ENCODE measurements at regions of chr1 and their contacts with region 1.

Region 1: DNA sequence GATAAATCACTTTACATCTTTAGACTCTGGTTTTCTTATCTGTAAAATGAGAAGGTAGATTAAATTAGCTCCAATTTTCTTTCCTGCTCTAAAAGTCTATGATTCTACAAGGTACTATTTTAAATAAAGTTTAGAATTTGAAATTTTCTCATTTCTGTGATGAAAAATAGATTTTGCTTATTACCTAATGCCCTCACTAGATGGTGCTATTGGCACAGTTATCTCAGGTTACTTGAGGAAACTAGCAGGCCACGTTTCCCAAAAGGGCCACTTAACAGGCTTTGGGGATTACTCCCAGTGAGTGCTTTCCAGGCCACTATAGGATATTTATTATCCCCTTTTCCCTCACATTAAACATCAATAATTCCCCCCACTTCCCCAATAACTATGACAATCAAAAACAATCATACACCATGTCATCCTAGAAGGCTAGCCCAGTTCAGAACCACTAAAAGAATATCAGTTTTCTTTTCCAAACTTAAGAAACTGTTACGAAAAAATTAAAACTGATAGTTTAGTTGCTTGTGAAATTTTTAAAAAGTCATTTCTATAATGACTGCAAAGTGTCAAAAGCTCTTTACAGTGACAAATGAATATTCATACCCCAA is 30.6 kb downstream of the OMA1 start:
- DNase-seq: peak; percentile 79
- H3K4me3 Mint-ChIP-seq: no peak overlapping the region
- H3K27ac Mint-ChIP-seq: no peak overlapping the region
- H3K4me1 Mint-ChIP-seq: no peaks in the 10 kb centered on the region
- H3K27me3 Mint-ChIP-seq: no peaks in the 10 kb centered on the region
- CTCF ChIP-seq: peak; percentile 60

Region 2: GRCh38 chr1:58528518-58528917 is 12.6 kb after region 1 on chr1:
- CTCF ChIA-PET with region 1: interaction called, 26 read pairs
- POLR2A ChIA-PET with region 1: interaction called, 3 read pairs
- intact Hi-C with region 1: no loop called
- DNase-seq: peak; percentile 68
- H3K4me3 Mint-ChIP-seq: no peak overlapping the region
- H3K27ac Mint-ChIP-seq: peak overlapping the region; percentile 61
- H3K4me1 Mint-ChIP-seq: peaks cover 12% of the 10 kb centered on the region
- H3K27me3 Mint-ChIP-seq: no peaks in the 10 kb centered on the region
- CTCF ChIP-seq: no peak

Region 3: DNA sequence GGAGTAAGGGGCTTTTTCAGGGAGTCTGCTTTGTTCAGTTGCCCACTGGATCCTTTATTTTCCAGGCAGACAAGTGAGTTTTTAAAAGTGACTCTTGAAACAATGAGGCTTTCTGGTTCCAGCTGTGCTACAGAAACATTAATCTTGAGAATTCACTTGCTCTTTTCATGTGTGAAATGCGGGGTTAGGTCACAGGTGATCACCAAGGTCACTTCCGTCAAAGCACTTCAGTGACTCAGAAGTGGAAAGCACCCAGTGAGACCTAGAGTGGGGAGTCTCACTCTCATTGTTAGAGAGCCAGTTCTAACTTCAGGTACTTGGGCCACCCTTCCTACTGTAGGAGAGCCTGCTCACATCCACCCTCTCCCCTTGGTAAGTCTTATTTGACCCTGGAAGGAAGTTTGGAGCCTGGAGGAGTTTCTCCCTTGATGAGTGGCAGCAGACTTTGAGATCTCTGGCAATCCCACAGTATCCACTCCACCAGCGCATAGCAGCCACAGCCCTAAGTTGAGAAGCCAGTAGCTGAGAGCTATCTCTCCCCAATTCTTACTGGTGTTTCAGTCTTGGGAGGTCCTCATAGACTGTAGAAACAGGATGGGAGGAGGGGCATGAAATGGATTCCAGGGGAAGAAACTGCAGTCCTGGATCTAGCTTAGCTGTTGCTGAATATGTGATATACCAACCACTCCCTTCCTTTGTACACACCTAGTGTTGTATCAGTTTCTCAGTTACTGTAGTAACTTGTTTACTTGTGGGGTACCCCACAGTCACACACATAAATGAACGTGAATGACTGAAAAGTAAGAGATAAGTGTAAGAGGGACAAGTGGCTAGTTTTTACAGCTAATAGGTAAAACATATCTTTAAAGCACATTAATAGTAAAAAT is 58.0 kb after region 1 on chr1:
- CTCF ChIA-PET with region 1: interaction called, 3 read pairs
- POLR2A ChIA-PET with region 1: interaction called, 18 read pairs
- intact Hi-C with region 1: no loop called
- DNase-seq: peak; percentile 69
- H3K4me3 Mint-ChIP-seq: peak overlapping the region; percentile 89
- H3K27ac Mint-ChIP-seq: peak overlapping the region; percentile 70
- H3K4me1 Mint-ChIP-seq: peaks cover 29% of the 10 kb centered on the region
- H3K27me3 Mint-ChIP-seq: no peaks in the 10 kb centered on the region
- CTCF ChIP-seq: no peak

Region 4: GRCh38 chr1:58652651-58653184 is 136.8 kb after region 1 on chr1:
- CTCF ChIA-PET with region 1: interaction called, 185 read pairs
- POLR2A ChIA-PET with region 1: interaction called, 21 read pairs
- intact Hi-C with region 1: loop called (anchors 1 kb)
- DNase-seq: peak; percentile 84
- H3K4me3 Mint-ChIP-seq: no peak overlapping the region
- H3K27ac Mint-ChIP-seq: no peak overlapping the region
- H3K4me1 Mint-ChIP-seq: peaks cover 22% of the 10 kb centered on the region
- H3K27me3 Mint-ChIP-seq: no peaks in the 10 kb centered on the region
- CTCF ChIP-seq: peak; percentile 75

Region 5: DNA sequence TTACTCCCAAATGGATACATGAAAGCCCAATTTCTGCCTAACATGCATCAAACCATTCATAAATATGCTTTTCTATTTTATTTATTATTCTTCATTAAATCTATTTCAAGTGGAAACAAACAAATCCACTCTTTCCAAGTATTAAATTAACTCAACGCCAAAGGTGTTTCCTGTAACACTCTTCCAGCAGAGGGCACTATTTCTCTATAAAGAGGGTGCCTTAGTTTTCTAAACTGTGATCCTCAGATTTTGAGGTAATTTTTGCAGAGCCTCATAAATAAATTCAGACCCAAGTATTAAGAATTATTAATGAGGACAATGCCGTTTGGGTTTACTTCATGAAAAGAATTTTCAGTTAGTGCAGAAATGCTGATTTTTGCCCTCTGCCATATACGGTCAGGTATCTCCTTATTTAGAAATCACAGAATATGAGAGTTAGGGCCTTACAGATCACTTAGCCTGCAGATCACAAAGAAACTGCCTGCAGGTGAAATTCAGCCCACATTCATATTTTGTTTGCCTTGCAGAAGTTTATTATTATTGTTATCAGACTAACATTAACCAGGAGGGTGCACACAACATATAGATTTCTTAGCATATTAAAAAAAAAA is 224.1 kb after region 1 on chr1:
- CTCF ChIA-PET with region 1: no interaction called
- POLR2A ChIA-PET with region 1: no interaction called
- intact Hi-C with region 1: loop called (anchors 1 kb)
- DNase-seq: peak; percentile 69
- H3K4me3 Mint-ChIP-seq: no peak overlapping the region
- H3K27ac Mint-ChIP-seq: no peak overlapping the region
- H3K4me1 Mint-ChIP-seq: peaks cover 6% of the 10 kb centered on the region
- H3K27me3 Mint-ChIP-seq: no peaks in the 10 kb centered on the region
- CTCF ChIP-seq: peak; percentile 54

Region 6: GRCh38 chr1:59947047-59947938 is 1431.4 kb after region 1 on chr1:
- CTCF ChIA-PET with region 1: no interaction called
- POLR2A ChIA-PET with region 1: no interaction called
- intact Hi-C with region 1: loop called (anchors 10 kb)
- DNase-seq: peak; percentile 76
- H3K4me3 Mint-ChIP-seq: no peak overlapping the region
- H3K27ac Mint-ChIP-seq: no peak overlapping the region
- H3K4me1 Mint-ChIP-seq: no peaks in the 10 kb centered on the region
- H3K27me3 Mint-ChIP-seq: peaks cover 14% of the 10 kb centered on the region
- CTCF ChIP-seq: peak; percentile 83

Measured in MCF 10A (cell line).